ENCODE measurements at regions of chrX and their contacts with region 1.

Region 1: DNA sequence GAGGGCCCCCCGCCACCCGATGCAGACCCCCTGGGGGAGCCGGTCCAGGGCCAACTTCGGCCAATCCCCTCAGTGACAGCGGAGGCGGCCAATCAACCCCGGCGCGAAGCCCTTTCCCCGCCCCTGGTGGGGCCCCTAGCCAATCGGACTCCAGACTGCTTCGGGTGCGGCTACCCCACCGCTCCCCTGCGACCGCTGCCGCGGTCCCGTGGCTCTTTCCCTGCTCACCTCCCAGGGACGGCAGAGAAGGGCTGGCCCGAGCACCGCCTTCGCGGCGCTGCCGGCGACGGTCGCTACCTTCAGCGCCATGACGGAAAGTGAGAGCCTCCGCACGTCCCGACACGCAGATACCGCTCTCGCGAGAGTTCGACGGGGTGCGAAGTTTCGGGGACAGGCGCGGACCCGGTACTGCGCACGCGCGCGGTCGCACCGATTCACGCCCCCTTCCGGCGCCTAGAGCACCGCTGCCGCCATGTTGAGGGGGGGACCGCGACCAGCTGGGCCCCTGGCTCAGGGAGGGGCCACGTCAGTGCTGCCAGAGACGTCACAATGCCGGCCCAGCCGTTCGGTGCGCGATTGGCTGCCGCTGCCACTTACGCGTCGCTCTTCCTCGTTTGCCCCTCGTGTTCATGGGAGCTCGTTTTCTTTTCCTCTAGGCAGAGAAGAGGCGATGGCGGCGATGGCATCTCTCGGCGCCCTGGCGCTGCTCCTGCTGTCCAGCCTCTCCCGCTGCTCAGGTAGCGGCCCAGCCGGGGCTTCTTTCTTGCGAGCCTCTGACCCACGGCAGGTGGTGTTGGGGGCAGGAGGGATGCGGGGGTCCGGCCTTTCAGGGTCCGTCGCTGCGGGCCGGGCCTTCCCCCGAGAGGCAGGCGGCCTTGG is at the starts of genes IDH3G and SSR4:
- H3K4me3 ChIP-seq: peak within 1 kb of the TSS; percentile 80
- H3K27ac ChIP-seq: peak within 1 kb of the TSS; percentile 89
- H3K4me1 ChIP-seq: no peaks in the 10 kb centered on the region
- CTCF ChIP-seq: peak; percentile 91

Region 2: GRCh38 chrX:153763989-153764755 is 30.1 kb before region 1 on chrX and contains the start of gene PLXNB3:
- CTCF ChIA-PET with region 1: interaction called, 4 read pairs
- POLR2A ChIA-PET with region 1: interaction called, 12 read pairs
- H3K4me3 ChIP-seq: no peak within 1 kb of the TSS
- H3K27ac ChIP-seq: no peak within 1 kb of the TSS
- H3K4me1 ChIP-seq: 0 out of 2 replicates have a peak, but pooled peaks cover 3% of the 10 kb centered on the region
- CTCF ChIP-seq: peak; percentile 87

Region 3: DNA sequence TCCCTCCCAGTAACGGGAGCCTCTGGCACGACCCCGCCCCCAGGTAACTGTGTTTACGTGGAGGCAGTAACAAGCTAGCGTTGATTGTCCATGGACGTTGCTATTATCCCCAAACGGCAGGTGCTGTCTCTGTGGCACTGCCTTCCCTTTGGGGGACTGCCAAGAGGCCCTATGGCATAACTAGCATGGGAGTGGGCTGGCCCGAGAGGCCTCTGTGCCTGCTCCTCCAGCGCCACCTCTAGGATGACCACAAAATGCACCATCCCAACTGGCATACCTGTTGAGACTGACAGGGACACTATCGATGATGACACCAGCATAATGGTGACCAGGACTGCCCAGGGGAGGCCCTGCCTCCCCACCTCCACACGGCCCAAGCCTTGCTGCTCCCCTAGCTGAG is 11.9 kb before region 1 on chrX:
- CTCF ChIA-PET with region 1: interaction called, 3 read pairs
- POLR2A ChIA-PET with region 1: interaction called, 16 read pairs
- H3K4me3 ChIP-seq: no peak overlapping the region
- H3K27ac ChIP-seq: no peak overlapping the region
- H3K4me1 ChIP-seq: no peaks in the 10 kb centered on the region
- CTCF ChIP-seq: no peak

Region 4: DNA sequence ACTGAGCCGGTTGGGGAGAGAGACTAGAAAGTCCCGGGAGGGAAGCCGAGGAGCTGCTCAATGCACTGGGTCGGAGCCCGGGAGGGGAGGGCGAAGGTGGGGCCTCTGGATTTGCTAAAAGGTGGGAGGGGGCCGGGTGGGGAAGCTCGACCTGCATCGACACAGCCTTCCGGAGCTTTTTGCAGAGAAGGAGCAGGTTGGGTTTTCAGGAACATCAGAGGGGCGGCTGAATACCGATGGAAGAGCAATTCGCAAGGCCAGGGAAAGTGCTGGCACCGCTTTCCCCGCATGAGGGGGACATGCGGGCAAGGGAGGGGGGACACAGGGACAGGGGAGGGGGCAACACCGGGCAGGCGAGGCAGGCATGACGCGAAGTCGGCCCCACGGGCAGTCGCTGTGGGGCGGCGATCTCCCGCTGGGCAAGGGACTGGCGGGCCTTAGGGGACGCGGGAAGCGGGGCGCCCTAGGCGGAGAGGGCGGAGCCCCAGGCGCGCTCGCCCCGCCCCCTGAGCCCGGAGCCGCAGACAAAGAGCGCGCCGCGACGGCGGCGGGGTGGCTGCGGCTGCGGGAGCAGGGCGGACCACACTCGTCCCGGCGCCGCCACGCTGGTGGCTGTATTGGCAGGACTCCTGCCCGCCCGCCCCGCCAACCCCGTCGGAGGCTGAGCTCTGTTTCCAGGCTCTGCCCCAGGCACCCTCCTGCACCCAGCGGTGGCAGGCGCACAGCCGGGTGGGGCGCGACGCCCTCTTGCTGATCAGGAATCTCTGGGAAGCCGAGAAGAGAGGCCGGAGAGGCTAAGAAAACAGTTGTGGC is 24.5 kb after region 1 on chrX:
- CTCF ChIA-PET with region 1: no interaction called
- POLR2A ChIA-PET with region 1: interaction called, 12 read pairs
- H3K4me3 ChIP-seq: peak overlapping the region; percentile 27
- H3K27ac ChIP-seq: no peak overlapping the region
- H3K4me1 ChIP-seq: no peaks in the 10 kb centered on the region
- CTCF ChIP-seq: no peak

Region 5: GRCh38 chrX:153828723-153829548 is 34.7 kb after region 1 on chrX:
- CTCF ChIA-PET with region 1: no interaction called
- POLR2A ChIA-PET with region 1: no interaction called
- H3K4me3 ChIP-seq: peak overlapping the region; percentile 33
- H3K27ac ChIP-seq: no peak overlapping the region
- H3K4me1 ChIP-seq: no peaks in the 10 kb centered on the region
- CTCF ChIP-seq: no peak

Measured in HEK293 (cell line).